ENCODE measurements at regions of chr1 and their contacts with region 1.

Region 1: GRCh38 chr1:12658531-12659453 is 14.9 kb downstream of the AADACL4 start:
- DNase-seq: peak; percentile 70
- ATAC-seq: peak; percentile 89

Region 2: GRCh38 chr1:12031039-12031980 is 627.5 kb before region 1 on chr1:
- intact Hi-C with region 1: no loop called
- DNase-seq: peak; percentile 67
- ATAC-seq: peak; percentile 77

Region 3: GRCh38 chr1:12314333-12314903 is 344.4 kb before region 1 on chr1:
- intact Hi-C with region 1: loop called (anchors 10 kb)
- DNase-seq: no peak
- ATAC-seq: peak; percentile 49

Region 4: DNA sequence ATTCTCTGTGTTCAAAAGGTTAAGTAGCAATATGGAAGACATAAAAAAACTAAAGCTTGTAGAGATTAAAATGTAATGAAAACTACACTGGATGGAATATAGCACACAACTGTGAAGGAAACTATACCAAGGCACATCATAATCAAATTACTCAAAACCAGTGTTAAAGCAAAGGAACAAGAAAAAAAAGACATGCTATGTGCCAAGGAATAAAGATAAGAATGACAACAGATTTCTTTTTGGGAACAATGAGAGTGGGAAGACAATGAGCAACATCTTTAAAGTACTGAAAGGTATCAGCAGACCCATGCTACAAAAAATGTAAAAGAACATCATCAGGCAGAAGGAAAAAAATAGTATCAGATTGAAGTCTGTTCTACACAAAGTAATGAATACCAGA is 271.2 kb before region 1 on chr1:
- intact Hi-C with region 1: no loop called
- DNase-seq: no peak
- ATAC-seq: no peak